ENCODE measurements at regions of chr5 and their contacts with region 1.

Region 1: DNA sequence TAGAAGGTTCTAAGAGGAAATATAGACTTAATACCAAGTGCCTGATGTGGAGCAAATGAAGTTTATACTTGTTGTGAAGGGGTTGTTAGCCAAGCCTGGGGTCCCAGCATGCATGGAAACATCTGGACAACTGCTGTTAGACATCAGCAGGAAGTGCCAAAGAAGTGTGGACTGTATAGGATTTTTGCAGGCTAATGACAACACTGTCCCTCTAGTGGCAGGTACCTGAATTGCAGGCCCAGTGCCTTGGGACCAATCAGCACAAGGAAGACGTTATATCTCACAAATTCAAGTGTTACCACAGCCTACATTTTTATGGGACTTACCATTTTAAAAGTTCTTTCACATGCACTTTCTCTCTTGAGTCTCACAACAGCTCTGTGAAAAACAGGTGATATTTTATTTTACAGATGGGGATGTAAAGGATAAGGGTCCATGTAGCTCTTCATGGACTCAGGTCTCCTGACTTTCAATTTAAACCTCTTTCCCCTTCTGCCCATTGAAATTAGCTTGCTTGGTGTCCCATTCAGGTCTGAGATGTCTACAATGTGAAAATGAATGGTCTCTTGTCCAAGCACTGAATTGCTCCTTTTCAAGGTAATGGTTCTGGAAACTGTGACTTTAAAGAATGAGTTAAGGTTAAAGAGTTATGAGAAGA is 89.0 kb upstream of the MAP1B start:
- DNase-seq: no peak
- H3K4me3 ChIP-seq: no peak overlapping the region
- H3K27ac ChIP-seq: no peak overlapping the region
- H3K27me3 ChIP-seq: no peaks in the 10 kb centered on the region
- CTCF ChIP-seq: peak; percentile 46 to 80 (median 66)

Region 2: DNA sequence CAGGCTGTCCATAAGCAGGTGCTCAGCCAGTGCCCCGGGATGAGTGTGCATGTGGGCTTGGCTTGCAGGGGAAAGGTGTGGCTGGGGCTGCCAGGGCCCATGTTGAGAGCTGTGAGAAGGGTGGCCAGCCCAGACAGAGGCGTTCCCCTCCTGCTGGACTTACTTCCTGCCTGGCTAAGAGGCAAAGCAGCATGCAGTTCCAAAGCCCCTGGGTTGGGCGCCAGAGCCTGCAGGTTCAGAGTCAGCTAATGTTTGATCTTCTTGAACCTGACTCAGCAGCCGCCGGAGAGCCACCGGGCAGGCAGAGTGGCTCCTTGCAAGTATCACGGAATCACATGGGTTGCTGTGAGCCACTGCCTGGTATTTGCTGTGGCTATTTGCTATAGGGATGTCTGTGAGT is 79.4 kb before region 1 on chr5:
- intact Hi-C with region 1: loop called in 1 of 2 experiments (anchors 5 kb)
- DNase-seq: peak in 1 of 10 donors; percentile 62
- H3K4me3 ChIP-seq: peak overlapping the region in 3 of 59 donors; percentile 5 to 35 (median 15)
- H3K27ac ChIP-seq: peak overlapping the region; percentile 30 to 90 (median 78)
- H3K27me3 ChIP-seq: no peaks in the 10 kb centered on the region
- CTCF ChIP-seq: no peak

Region 3: DNA sequence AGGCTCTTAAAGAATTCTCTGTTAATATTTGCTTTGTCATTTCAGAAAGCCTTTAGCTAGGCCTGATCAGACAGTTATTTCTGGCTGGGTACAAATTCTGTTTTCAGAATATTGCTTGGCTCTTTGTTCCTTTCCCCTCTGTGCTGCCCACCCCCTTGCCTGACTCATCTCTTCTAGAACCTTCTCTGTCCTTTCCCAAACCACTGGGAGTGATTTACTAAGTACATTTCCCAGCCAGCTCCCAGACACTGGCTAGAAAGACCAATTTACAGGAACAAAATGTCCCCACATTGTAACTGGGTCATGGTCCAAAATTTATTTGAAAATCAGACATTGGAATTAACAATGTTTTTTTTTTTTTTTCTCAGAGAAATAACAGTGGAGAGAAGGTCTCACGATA is 44.1 kb before region 1 on chr5:
- intact Hi-C with region 1: no loop called
- DNase-seq: no peak
- H3K4me3 ChIP-seq: no peak overlapping the region
- H3K27ac ChIP-seq: peak overlapping the region in 36 of 59 donors; percentile 2 to 73 (median 44)
- H3K27me3 ChIP-seq: no peaks in the 10 kb centered on the region
- CTCF ChIP-seq: no peak

Region 4: DNA sequence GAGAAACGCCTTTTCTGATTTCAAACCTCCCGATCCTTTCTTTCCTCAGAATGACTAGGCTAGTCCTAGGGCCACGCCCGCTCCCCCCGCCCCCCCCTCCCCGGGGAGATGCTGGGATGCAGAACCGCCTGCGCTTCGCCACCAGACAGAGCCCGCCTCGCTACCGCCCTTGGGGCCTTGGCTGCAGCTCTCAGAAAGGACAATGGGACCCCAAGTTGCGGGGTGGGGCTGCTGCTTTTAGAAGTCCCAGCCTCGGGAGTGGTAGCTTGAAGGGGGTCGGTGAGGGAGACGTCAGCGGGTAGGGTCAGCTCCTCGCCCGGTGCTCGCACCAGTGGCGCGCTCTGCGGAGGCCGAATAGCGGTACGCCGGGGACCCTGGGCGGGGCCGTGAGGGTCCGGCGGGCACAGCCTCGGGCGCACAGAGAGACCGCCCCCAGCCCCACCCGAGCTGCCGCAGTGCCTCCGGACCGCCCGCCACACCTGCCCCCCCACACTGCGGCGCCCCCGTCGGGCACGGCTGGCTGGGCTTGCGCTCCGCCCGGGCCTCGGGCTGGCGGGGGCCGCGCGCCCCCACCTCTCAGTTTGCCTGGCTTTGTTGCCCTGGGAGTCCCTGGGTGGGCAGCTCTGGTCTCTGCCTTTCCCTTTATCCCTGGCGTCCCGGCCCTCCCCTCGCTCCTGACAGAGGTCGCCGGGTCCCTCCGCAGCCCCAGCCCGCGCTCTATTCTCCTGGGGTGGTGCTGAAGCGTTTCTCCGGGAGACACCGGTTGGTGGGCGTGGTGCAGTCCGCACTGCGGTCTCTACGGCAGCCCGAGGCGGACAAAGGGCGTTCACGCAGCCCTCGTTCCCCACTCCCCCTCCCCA is 90.2 kb after region 1 on chr5:
- intact Hi-C with region 1: loop called in 1 of 2 experiments (anchors 5 kb)
- DNase-seq: peak; percentile 67 to 86 (median 78)
- H3K4me3 ChIP-seq: peak overlapping the region; percentile 68 to 97 (median 86)
- H3K27ac ChIP-seq: peak overlapping the region; percentile 46 to 98 (median 92)
- H3K27me3 ChIP-seq: no peaks in the 10 kb centered on the region
- CTCF ChIP-seq: peak in 8 of 56 donors; percentile 9 to 29 (median 15)